ENCODE measurements at regions of chr2 and their contacts with region 1.

Region 1: DNA sequence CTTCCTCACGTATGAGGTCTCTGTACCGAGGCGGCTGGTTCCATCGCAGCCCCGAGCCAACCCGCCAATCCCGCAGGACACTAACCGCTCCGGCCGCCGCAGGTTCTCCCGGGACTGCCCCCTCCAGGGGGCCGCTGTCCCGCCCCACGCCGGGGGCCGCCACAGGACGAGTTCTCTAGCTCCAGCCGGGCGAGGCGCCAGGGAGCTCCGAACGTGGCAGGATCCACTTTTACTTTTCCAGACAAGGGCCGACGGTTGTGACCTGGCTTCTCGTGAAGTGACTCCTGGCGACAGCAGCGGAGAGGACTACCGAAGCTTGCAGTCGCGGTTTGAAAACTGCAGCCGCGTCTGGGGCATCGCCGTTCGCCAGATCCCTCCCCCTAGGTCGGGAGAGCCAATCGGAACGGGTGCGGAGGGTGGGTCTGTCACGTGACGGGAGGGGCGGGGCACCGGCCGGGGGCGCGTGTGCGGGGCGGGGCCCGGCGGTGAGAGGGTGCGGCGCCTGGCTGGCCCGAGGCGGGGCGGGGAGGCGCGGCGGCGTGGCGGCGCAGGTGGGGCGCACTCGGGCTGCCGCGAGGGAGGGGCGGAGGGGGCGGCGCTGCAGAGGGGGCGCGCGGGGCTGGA is at the start of gene STK17B:
- DNase-seq: peak; percentile 97
- H3K4me3 ChIP-seq: peak within 1 kb of the TSS; percentile 98
- H3K27ac ChIP-seq: peak within 1 kb of the TSS; percentile 99
- H3K4me1 ChIP-seq: peaks cover 37% of the 10 kb centered on the region
- CTCF ChIP-seq: no peak
- total RNA-seq, gene STK17B: 87.4 and 95.0 TPM in 2 replicates

Region 2: GRCh38 chr2:195995499-195995898 is 175.9 kb before region 1 on chr2:
- CTCF ChIA-PET with region 1: no interaction called
- POLR2A ChIA-PET with region 1: no interaction called
- intact Hi-C with region 1: no loop called
- DNase-seq: no peak
- H3K4me3 ChIP-seq: no peak overlapping the region
- H3K27ac ChIP-seq: no peak overlapping the region
- H3K4me1 ChIP-seq: no peaks in the 10 kb centered on the region
- CTCF ChIP-seq: no peak

Region 3: GRCh38 chr2:196131384-196131937 is 39.9 kb before region 1 on chr2:
- CTCF ChIA-PET with region 1: no interaction called
- POLR2A ChIA-PET with region 1: interaction called, 4 read pairs
- intact Hi-C with region 1: loop called (anchors 1 kb)
- DNase-seq: peak; percentile 86
- H3K4me3 ChIP-seq: no peak overlapping the region
- H3K27ac ChIP-seq: peak overlapping the region; percentile 41
- H3K4me1 ChIP-seq: peaks cover 5% of the 10 kb centered on the region
- CTCF ChIP-seq: peak; percentile 92

Region 4: DNA sequence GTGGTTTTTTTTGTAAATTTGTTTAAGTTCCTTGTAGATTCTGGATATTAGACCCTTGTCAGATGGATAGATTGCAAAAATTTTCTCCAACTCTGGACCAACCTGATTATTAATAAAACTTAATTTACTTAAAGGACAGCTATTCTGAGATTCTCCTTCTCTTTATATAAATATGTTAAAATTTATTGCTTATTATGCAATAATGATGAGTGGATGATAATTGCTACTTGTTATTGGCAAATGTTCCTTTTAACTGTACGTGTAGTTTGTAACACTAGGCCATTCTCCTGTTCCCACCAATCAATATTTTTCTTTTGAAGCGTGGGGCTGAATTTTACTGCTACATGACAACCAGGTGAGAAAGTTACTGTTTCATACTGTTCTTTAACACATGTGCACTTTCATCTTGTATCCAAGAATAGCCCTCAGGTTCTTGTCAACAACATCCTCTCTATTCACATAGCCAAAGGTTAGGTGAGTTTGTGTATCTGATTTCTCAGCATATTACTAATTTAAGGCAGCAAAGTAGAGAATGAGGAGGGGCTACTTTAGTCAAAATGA is 16.6 kb after region 1 on chr2:
- CTCF ChIA-PET with region 1: no interaction called
- POLR2A ChIA-PET with region 1: interaction called, 104 read pairs
- intact Hi-C with region 1: no loop called
- DNase-seq: peak; percentile 74
- H3K4me3 ChIP-seq: peak overlapping the region; percentile 8
- H3K27ac ChIP-seq: peak overlapping the region; percentile 64
- H3K4me1 ChIP-seq: peaks cover 69% of the 10 kb centered on the region
- CTCF ChIP-seq: no peak

Region 5: DNA sequence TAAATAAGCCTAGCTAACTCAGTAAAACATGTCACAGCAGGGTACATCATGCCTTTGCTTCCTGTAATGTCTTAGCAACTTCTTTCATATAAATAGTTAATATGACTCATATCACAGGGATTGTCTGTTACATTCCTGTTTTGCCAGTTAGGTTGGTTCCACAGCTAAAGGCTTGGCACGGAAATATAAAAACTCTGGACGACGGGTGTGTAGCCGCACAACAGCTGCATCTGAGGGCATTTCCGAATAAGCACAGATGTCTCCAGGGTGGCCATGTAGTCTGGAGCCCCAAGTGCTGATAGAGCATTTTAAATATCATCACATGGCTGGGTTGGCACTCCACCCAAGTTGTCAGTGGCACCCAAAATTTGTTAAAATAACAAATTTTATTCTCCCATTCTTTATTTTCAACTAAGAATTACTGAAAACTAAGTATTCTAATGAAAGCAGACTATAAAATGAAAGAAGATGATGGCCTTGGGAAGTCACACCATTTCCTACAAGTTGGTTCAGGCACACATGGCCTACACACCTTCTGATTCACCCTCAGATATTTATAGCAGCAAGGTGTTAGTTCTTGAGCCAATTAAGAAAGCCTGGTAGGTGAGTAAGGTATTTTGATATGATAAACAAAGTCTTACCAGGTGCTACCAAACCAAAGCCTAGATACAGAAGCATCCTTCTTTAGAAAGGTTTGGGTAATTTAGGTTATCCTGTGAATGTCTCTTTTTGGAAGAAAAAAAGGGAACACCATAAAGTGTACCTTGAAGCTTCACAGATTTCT is 61.9 kb after region 1 on chr2:
- CTCF ChIA-PET with region 1: interaction called, 6 read pairs
- POLR2A ChIA-PET with region 1: interaction called, 121 read pairs
- intact Hi-C with region 1: loop called (anchors 1 kb)
- DNase-seq: peak; percentile 45
- H3K4me3 ChIP-seq: peak overlapping the region; percentile 9
- H3K27ac ChIP-seq: peak overlapping the region; percentile 79
- H3K4me1 ChIP-seq: peaks cover 54% of the 10 kb centered on the region
- CTCF ChIP-seq: no peak

Region 6: DNA sequence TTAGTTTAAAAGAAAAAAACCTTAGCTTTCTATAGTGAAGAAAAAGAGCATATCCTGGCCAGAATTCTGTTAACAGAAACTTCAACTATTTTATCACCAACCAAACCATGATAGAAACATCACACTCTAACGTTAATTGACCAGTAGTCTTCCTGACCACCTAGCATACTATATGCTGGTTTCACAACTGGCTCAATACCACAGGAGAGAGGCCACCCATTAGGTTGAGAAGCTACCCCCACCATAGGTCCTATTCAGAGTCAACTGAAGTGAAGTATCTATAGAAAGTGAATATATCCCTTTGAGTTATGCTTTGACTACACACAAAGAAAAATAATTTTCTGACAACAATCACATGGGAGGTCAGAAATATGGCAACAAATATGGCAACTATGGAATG is 85.2 kb after region 1 on chr2:
- CTCF ChIA-PET with region 1: no interaction called
- POLR2A ChIA-PET with region 1: interaction called, 15 read pairs
- intact Hi-C with region 1: no loop called
- DNase-seq: no peak
- H3K4me3 ChIP-seq: no peak overlapping the region
- H3K27ac ChIP-seq: no peak overlapping the region
- H3K4me1 ChIP-seq: peaks cover 19% of the 10 kb centered on the region
- CTCF ChIP-seq: no peak

Region 7: GRCh38 chr2:196277002-196277401 is 105.6 kb after region 1 on chr2:
- CTCF ChIA-PET with region 1: interaction called, 23 read pairs
- POLR2A ChIA-PET with region 1: interaction called, 226 read pairs
- intact Hi-C with region 1: loop called (anchors 1 kb)
- DNase-seq: peak; percentile 81
- H3K4me3 ChIP-seq: peak overlapping the region; percentile 56
- H3K27ac ChIP-seq: peak overlapping the region; percentile 100
- H3K4me1 ChIP-seq: peaks cover 49% of the 10 kb centered on the region
- CTCF ChIP-seq: peak; percentile 97

Region 8: DNA sequence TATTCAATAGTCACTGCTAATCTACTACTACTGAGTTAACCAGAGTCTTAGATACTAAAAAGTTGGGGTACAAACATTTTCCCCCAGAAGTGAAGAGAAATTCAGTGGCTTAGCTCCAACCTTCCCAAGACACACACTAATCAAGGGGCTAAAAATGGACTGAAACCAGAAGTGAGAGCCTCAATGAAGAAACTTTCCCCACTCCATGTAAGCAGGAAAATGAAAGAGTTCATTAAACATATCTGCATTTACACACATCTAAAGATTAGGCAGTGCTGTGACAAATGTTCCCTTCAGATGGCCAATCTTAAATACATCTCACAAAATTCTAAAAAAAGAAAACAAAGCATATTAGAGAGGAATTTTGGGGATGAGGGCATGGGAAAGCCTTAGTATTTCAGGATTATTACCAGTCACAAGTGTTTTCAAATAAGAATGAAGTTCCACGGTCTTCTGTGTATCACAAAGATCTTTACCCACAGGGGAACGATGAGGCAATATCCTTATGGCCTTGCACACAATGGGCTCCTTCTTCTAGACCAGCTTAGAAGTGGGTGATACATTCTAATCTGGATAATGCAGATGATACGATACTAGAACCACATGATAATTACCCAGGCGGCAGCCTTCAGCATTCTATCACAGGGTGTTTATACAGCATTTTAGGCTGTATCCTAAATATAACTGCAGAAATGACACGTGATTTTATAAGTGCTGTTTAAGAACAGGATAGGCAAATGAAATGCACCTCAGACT is 1122.1 kb after region 1 on chr2:
- CTCF ChIA-PET with region 1: no interaction called
- POLR2A ChIA-PET with region 1: no interaction called
- intact Hi-C with region 1: loop called (anchors 10 kb)
- DNase-seq: peak; percentile 79
- H3K4me3 ChIP-seq: peak overlapping the region; percentile 64
- H3K27ac ChIP-seq: peak overlapping the region; percentile 91
- H3K4me1 ChIP-seq: peaks cover 69% of the 10 kb centered on the region
- CTCF ChIP-seq: no peak